GM10248 (cell line): ENCODE measurements at regions of chr3 and their contacts with region 1.

Region 1: GRCh38 chr3:66998113-66998903 is at the start of gene KBTBD8:
- DNase-seq: peak; percentile 95
- CTCF ChIP-seq: no peak

Region 2: DNA sequence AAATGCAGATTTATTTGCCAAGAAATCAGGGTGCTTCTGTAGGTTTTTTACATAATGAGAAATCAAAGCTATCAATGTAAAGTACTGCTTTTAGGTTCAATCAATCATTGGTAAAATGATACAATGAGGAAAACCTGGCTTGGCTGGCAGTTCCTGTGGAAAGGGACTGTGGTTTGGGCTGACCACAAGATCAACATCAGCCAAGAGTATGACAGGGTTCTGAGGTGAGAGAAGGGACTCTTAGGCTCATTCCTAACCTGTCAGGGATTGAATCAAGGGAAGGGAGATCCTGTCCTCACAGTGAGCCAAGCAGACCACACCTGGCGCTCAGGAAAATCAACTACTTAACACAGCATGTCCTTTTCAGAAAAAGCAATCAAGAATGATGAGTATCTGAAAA is 1070.8 kb before region 1 on chr3:
- CTCF ChIA-PET with region 1: no interaction called
- POLR2A ChIA-PET with region 1: no interaction called
- DNase-seq: no peak
- CTCF ChIP-seq: no peak

Region 3: GRCh38 chr3:66948041-66948440 is 50.3 kb before region 1 on chr3:
- CTCF ChIA-PET with region 1: no interaction called
- POLR2A ChIA-PET with region 1: no interaction called
- DNase-seq: no peak
- CTCF ChIP-seq: no peak

Region 4: DNA sequence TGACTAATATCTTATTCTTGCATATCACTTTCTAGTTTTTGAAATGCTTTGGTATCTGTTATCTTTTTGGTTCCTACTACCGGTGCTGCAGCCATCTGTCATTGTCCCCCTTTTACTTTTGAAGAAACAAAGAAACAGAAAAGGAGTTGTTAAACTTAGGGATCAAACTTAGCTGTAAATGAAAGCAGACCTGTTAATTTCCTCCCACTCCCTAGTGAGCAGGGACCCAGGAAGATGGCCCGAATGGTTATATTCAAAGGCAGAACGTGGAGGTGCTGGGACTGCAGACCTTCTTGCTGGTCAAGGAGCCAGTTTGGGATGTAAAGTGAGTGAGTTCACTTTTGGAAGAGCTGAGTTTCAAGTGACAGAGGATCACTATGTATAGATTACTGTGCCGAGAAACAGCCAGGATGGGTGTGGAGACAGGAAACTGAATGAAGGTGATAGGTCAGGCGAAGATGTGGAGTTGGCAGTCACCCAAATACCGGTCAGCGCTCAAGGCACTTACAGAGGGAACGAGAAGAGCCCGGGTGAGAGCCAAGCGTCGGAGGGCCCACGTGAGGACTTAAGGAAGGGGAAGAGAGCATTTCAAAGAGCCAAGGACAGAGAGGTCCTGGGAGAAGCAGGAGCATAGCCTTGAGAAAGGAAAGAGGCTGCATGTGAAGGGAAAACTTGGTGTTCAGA is 19.9 kb after region 1 on chr3:
- CTCF ChIA-PET with region 1: interaction called, 10 read pairs
- POLR2A ChIA-PET with region 1: interaction called, 5 read pairs
- DNase-seq: no peak
- CTCF ChIP-seq: no peak

Region 5: DNA sequence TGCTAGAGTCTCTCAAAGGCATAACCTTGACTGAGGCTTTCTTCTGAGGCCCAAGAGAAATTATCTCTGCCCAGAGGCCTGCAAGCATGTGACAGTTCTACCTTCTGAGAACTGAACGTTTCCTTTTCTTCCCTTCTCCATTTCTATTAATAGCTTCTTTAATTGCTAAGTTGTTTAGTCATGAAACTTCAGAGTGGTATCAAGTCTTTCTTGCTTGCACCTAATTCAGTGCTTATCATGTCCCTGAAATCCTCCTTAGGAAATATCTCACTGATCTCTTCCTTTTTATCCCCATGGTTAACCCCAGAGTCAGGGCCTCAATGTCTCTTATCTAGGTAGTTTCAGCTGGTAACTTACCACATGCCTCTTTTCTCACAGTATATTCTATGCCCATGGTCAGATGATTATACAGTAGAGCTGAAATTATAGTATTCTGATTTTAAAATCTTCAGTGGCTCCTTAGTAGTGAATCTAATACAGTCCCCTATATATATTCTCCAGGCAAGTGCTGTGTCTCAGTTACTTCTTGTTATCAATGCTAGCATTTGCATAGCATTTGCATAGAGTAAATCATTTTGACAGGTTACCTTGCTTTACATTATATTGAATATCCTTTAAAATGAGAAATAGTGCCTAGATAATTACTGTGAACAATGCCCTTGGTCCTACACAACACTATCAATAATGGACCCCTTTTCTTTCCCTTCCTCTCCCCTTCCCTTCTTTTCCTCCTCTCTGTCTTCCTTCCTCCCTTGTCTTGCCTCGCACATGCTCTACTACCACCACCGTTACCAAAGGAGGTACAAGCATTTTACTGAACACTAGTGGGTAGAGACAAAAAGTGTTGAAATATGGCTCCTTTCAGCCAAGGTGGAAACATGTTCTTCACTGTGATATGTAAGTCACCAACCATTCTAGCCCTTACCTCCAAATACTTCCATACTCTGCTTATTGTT is 32.8 kb after region 1 on chr3:
- CTCF ChIA-PET with region 1: no interaction called
- POLR2A ChIA-PET with region 1: no interaction called
- DNase-seq: no peak
- CTCF ChIP-seq: no peak

Region 6: DNA sequence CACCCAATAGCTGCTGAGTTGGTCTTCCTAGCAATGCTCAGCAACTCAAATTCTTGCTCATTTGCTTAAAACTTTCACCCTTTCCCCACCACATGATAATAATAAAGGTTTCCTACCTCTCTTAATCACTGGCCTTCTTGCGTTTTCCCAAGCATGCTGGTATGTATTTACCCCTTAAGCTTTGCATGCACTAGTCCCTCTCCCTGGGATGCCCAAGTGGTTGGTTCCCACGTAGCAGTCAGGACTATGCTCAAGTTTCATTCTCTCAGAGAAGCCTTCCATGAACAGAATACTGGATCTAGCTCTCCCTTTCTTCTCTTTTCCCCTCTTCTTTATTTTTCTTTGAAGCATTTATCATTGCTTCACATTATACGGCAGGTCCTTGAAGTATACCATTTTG is 108.6 kb after region 1 on chr3:
- CTCF ChIA-PET with region 1: no interaction called
- POLR2A ChIA-PET with region 1: no interaction called
- DNase-seq: no peak
- CTCF ChIP-seq: no peak